Panc1 (cell line): ENCODE measurements at regions of chr2 and their contacts with region 1.

Region 1: DNA sequence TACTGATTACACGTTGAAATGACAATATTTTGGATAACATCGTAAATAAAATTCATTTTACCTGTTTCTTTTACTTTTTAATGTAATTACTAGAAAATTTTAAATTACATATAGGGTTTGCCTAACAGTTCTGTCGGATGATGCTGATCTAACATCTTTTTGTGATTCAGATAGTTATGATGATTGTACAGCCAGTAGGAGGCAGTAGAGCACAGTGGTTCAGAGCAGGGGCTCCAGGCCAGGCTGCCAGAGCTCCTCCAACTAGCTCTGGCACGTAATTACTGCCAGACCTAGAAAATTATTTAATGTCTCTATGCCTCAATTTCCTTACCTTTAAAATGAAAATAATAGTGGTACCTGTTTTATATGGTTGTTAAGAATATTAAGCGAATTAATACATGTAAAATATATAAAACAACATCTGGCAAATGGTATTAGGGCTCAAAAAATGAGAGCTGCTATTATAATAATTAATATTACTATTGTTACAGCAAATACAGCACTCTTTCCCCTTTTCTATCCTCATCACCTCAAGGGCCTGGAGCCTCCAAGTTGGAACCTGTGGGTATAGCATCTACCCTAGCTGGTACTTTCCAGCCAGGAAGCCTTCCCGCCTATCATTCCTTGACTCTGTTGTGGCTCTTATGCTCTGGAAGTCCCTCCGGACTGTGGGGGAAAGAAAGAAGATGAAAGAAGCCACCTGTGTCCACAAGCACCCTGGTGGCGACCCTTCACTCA is 47.7 kb upstream of the PLA2R1 start:
- DNase-seq: peak; percentile 52
- ATAC-seq: peak; percentile 96
- H3K4me3 ChIP-seq: no peak overlapping the region
- H3K27ac ChIP-seq: peak overlapping the region; percentile 67
- H3K4me1 ChIP-seq: no peaks in the 10 kb centered on the region; the same call in none of the 2 replicates
- H3K27me3 ChIP-seq: no peaks in the 10 kb centered on the region
- CTCF ChIP-seq: peak; percentile 91

Region 2: DNA sequence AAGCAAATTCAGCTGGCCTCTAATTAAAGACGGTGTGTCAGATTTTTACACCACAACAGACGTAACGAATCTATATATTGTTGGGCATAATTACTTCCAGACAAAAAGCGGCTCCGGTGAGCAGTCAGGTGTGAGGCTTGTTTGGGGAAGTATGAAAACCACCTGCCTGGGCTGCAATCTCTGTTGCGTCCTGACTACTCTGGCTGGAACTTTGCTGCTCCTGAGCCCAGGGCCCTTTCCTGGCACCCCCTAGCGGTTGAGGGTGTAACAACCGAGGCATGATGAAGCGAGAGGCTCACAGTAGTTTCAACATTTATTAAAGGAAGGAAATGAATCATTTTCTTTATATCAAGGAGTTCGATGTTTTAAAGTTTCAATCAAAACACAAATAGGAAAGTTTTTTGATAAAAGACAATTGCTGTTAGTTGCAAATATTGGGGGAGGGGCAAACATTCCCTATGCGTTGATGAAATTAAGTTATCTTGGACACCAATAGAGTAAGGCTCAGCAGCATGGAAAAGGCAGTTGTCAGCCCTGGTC is 100.6 kb after region 1 on chr2:
- CTCF ChIA-PET with region 1: interaction called, 6 read pairs
- POLR2A ChIA-PET with region 1: no interaction called
- in situ Hi-C with region 1: no loop called
- intact Hi-C with region 1: loop called (anchors 2 kb)
- DNase-seq: no peak
- ATAC-seq: 0 out of 2 replicates have a peak, but pooled peaks have one; percentile 33
- H3K4me3 ChIP-seq: no peak overlapping the region
- H3K27ac ChIP-seq: peak overlapping the region; percentile 98
- H3K4me1 ChIP-seq: peaks cover 73% of the 10 kb centered on the region
- H3K27me3 ChIP-seq: no peaks in the 10 kb centered on the region
- CTCF ChIP-seq: peak; percentile 96

Region 3: DNA sequence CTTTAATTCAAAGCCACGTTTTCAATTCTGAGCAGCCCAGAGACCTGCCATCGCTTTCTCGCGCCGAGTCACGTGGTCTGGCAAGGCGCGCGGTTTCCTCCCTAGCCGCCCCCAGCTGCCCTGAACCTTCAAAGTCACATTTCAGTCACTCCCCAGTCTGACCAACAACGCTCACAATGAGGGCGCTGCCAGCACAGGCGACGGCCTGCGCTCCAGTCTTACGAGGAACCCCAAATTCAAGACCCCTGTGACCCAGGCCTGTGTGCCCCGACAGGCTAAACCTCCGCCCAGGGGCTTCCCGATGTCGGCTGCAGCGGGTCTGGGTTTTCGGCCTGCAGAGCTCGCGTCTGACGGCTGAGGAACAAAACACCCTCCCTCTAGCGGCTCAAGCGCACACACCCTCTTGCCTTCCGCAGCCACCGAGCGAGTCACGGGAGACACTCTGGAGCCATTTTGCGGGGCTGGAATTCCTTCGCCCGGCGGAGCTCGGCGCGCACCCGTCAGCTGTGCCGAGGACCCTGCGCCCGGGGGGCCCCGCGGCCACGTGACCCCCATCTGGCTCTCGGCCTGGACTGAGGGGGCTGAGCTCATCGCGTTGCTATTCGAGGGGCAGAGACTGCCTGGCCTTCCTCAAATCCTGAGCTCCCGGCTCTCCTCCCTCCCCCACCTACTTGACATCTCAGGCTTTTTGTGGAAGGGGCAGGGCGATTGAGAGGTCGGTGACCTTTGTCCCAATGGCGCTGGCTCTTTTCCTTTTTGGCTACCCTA is 159.9 kb after region 1 on chr2:
- CTCF ChIA-PET with region 1: interaction called, 14 read pairs
- POLR2A ChIA-PET with region 1: no interaction called
- in situ Hi-C with region 1: no loop called
- intact Hi-C with region 1: loop called (anchors 5 kb)
- DNase-seq: no peak
- ATAC-seq: peak; percentile 89
- H3K4me3 ChIP-seq: peak overlapping the region; percentile 38 to 45
- H3K27ac ChIP-seq: peak overlapping the region; percentile 88
- H3K4me1 ChIP-seq: peaks cover 20% of the 10 kb centered on the region
- H3K27me3 ChIP-seq: no peaks in the 10 kb centered on the region
- CTCF ChIP-seq: peak; percentile 67

Region 4: DNA sequence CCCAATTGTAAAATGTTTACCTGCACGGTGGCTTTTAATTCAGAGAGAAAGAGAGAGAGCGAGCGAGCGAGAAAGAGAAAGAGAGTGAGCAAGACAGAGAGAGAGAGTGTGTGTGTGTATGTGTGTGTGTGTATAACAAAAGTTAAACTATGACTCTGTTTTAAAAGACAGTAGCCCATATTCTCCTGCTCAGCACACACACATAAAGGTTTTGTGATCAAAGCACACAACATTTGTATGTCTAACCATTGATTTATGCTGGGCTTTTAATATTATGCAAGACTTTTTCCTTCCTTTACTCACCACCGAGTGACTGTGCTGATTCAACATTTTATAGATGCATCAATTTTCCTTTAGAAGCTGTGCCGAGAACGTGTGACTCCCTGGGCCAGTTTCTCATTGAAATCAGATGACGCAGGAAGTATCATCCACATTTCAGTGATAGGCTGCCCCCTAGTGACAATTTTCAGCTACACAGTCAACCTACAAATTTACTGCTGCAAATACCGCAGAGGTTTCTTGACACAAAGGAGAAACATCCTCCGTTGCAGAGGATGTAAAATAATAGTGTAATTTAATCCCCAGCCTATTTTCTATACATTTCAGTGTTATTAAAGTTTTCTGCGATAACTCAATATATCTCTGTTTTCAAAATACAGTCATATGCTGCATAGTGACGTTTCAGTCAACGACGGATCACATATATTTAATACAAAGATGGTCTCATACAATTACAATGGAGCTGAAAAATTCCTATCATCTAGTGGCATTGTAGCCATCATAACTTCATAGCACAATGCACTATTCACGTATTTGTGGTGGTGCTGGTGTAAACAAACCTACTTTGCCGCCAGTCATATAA is 884.3 kb after region 1 on chr2:
- CTCF ChIA-PET with region 1: interaction called, 3 read pairs
- POLR2A ChIA-PET with region 1: no interaction called
- in situ Hi-C with region 1: no loop called
- intact Hi-C with region 1: loop called (anchors 10 kb)
- DNase-seq: peak; percentile 77
- ATAC-seq: peak; percentile 91
- H3K4me3 ChIP-seq: no peak overlapping the region
- H3K27ac ChIP-seq: no peak overlapping the region
- H3K4me1 ChIP-seq: no peaks in the 10 kb centered on the region
- H3K27me3 ChIP-seq: no peaks in the 10 kb centered on the region; the same call in 1 of the 2 replicates
- CTCF ChIP-seq: peak; percentile 86